ENCODE measurements at regions of chr10 and their contacts with region 1.

Region 1: DNA sequence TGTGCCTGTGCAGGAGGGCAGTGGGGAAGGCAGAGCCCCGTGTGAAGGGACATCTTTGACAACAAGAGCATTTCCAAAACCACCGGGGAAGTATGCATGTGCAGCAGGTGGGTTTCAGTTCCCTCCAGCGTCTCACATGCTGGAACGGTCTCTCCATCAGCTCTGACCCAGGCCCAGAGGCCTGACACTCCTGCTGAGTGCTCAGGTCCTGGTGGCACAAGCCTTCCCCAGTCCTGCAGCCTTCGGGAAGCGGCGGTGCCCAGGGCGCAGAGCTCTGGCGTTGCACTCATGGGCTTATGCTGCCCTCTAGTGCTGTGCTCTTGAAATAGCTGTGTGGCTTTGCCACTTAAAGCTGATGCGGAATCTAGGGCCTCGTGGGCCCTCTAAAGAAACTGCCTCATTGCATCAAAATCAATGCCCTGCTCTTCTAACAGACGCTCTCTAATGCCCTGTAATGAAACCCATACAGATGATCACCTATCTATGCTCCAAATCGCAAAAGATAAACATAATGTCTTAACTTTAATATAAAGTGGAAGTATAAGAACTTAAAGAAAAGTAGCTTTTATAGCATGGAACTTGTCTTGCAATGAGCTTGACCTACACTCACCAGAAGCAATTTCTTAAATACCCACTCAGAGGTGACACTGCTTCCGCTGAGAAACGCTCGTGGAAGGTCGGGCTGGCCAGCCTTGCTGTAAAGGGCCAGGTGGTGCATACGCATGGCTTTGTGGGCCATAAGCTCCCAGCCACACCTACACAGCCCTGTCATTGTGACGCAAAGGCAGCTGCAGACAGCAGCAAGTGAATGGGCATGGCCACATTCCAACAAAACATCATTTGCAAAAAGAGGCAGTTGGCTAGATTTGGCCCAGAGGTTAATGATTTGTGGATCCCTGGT is 38.6 kb downstream of the CLRN3 start:
- DNase-seq: no peak
- H3K4me3 ChIP-seq: no peak overlapping the region
- H3K27me3 ChIP-seq: no peaks in the 10 kb centered on the region
- CTCF ChIP-seq: peak; percentile 86

Region 2: GRCh38 chr10:127869329-127869728 is 15.2 kb after region 1 on chr10:
- CTCF ChIA-PET with region 1: interaction called, 17 read pairs
- POLR2A ChIA-PET with region 1: no interaction called
- DNase-seq: no peak
- H3K4me3 ChIP-seq: no peak overlapping the region
- H3K27me3 ChIP-seq: no peaks in the 10 kb centered on the region
- CTCF ChIP-seq: no peak